Dorsolateral prefrontal cortex (tissue), 120 donors: ENCODE measurements at regions of chr1 and their contacts with region 1.

Region 1: GRCh38 chr1:89994805-89995597 is at the start of gene ZNF326:
- DNase-seq: peak; percentile 90 to 98 (median 94)
- H3K4me3 ChIP-seq: peak within 1 kb of the TSS; percentile 59 to 98 (median 89)
- H3K27ac ChIP-seq: peak within 1 kb of the TSS; percentile 74 to 98 (median 93)
- H3K27me3 ChIP-seq: no peaks in the 10 kb centered on the region
- CTCF ChIP-seq: peak in 35 of 56 donors; percentile 6 to 61 (median 34)
- total RNA-seq, gene ZNF326: 23.0 to 50.7 (median 32.2) TPM

Region 2: GRCh38 chr1:89632657-89633247 is 362.2 kb before region 1 on chr1 and contains the start of gene LRRC8C:
- intact Hi-C with region 1: loop called (anchors 10 kb)
- DNase-seq: peak; percentile 39 to 94 (median 78)
- H3K4me3 ChIP-seq: peak within 1 kb of the TSS; percentile 58 to 98 (median 93)
- H3K27ac ChIP-seq: peak within 1 kb of the TSS; percentile 88 to 99 (median 98)
- H3K27me3 ChIP-seq: no peaks in the 10 kb centered on the region
- CTCF ChIP-seq: peak in 44 of 56 donors; percentile 10 to 85 (median 42)
- total RNA-seq, gene LRRC8C: 10.3 to 21.7 (median 16.1) TPM

Region 3: GRCh38 chr1:89780721-89781120 is 214.3 kb before region 1 on chr1:
- intact Hi-C with region 1: loop called in 1 of 2 experiments (anchors 5 kb)
- DNase-seq: no peak
- H3K4me3 ChIP-seq: no peak overlapping the region
- H3K27ac ChIP-seq: no peak overlapping the region
- H3K27me3 ChIP-seq: no peaks in the 10 kb centered on the region
- CTCF ChIP-seq: peak in 55 of 56 donors; percentile 24 to 77 (median 56)

Region 4: GRCh38 chr1:90012305-90012704 is 17.3 kb after region 1 on chr1:
- intact Hi-C with region 1: no loop called
- DNase-seq: no peak
- H3K4me3 ChIP-seq: no peak overlapping the region
- H3K27ac ChIP-seq: no peak overlapping the region
- H3K27me3 ChIP-seq: no peaks in the 10 kb centered on the region
- CTCF ChIP-seq: no peak